Natural killer cell (primary cell): ENCODE measurements at regions of chr7 and their contacts with region 1.

Region 1: DNA sequence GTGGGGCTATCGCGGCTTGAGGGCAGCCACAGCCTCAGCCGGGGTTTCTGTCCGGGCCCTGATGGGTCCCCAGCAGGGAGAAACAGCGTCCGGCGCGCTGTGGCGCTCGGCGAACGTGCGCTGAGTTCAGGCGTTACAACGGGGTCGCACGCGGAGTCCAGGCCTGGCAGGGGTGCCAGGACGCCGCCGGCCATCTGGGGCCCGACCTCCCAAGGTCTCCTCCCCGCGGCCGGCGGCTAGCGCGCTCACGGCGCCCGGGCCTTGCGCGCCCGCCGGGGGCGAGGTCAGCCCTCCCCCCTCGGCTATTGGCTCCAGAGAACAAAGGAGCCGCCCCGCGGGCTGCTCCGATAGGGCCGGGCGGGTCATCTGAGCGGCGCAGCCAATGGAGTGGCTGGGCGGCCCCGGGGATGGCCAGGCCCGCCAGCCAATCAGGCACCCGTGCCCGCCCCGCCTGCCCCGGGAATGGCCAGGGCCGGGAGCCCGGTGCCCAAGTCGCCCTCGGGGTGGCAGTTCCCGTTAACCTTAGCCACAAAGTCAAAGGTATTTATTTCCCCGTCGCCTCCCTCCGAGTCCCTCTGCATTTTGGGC is at the start of gene ZNF775:
- DNase-seq: peak; percentile 94
- ATAC-seq: peak; percentile 97 to 99 (median 98)
- H3K4me3 ChIP-seq: peak within 1 kb of the TSS; percentile 68
- H3K4me3 Mint-ChIP-seq: peak within 1 kb of the TSS; percentile 92
- H3K27ac ChIP-seq: peak within 1 kb of the TSS; percentile 73
- H3K27ac Mint-ChIP-seq: peak within 1 kb of the TSS; percentile 81 to 86
- H3K4me1 ChIP-seq: peaks cover 26% of the 10 kb centered on the region
- H3K4me1 Mint-ChIP-seq: peaks cover 31 to 35% of the 10 kb centered on the region in 2 donors
- H3K27me3 ChIP-seq: no peaks in the 10 kb centered on the region
- H3K27me3 Mint-ChIP-seq: no peaks in the 10 kb centered on the region
- CTCF ChIP-seq: no peak
- total RNA-seq, gene ZNF775: 1.3 to 2.7 (median 1.6) TPM

Region 2: DNA sequence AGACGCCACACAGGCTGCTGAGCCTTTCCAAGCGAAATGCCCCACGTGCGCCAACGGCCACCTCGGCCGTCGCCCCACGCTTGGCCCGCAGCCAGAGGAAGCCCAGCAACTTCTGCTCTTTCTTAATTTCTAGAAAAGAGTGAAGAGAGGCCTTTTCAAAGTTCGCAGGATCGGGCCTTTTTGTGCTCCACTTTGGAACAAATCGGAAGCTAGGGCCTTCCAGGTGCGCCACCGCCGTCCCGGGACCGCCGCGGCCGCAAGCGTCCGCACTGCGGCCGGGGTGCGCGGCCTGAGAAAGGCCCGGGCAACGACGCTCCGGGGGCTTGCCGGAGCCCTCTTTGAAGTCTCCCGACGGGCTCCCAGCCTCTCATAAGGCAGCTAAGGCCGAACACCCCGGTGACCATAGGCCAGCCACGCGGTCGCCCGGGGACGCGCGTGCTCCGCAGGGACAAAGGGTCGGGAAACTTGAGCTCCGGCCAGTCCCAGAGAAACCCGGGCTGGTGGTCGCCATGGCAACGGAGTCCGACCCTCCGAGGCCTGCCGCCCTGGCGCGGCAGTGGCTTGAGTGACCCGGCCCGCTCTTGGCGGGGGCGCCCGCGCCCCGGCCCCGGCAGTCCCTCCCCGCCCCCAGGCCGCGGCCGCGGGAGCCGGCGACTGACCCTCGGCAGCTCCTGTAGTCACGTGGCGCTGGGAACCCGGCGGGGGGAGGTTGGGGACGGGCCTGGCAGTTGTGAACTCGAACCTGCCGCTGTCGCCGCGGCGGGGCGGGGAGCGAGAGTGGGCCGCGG is 10.7 kb before region 1 on chr7 and contains the start of gene REPIN1:
- intact Hi-C with region 1: loop called (anchors 1 kb)
- DNase-seq: peak; percentile 77 to 85
- ATAC-seq: peak; percentile 72 to 81 (median 76)
- H3K4me3 ChIP-seq: peak within 1 kb of the TSS; percentile 99
- H3K4me3 Mint-ChIP-seq: peak within 1 kb of the TSS; percentile 96
- H3K27ac ChIP-seq: peak within 1 kb of the TSS; percentile 87
- H3K27ac Mint-ChIP-seq: peak within 1 kb of the TSS; percentile 80 to 85
- H3K4me1 ChIP-seq: peaks cover 47% of the 10 kb centered on the region
- H3K4me1 Mint-ChIP-seq: peaks cover 13 to 35% of the 10 kb centered on the region in 2 donors
- H3K27me3 ChIP-seq: no peaks in the 10 kb centered on the region
- H3K27me3 Mint-ChIP-seq: no peaks in the 10 kb centered on the region
- CTCF ChIP-seq: no peak
- total RNA-seq, gene REPIN1: 58.9 to 79.4 (median 76.5) TPM

Region 3: GRCh38 chr7:150404805-150405583 is 26.0 kb after region 1 on chr7:
- intact Hi-C with region 1: loop called (anchors 2 kb)
- DNase-seq: peak; percentile 74 to 90
- ATAC-seq: peak; percentile 84 to 90 (median 88)
- H3K4me3 ChIP-seq: peak overlapping the region; percentile 87
- H3K4me3 Mint-ChIP-seq: peak overlapping the region; percentile 94
- H3K27ac ChIP-seq: peak overlapping the region; percentile 99
- H3K27ac Mint-ChIP-seq: peak overlapping the region; percentile 90 to 91
- H3K4me1 ChIP-seq: peaks cover 43% of the 10 kb centered on the region
- H3K4me1 Mint-ChIP-seq: peaks cover 34 to 37% of the 10 kb centered on the region in 2 donors
- H3K27me3 ChIP-seq: no peaks in the 10 kb centered on the region
- H3K27me3 Mint-ChIP-seq: no peaks in the 10 kb centered on the region
- CTCF ChIP-seq: peak; percentile 23